Endothelial cell of umbilical vein (primary cell): ENCODE measurements at regions of chr2 and their contacts with region 1.

Region 1: DNA sequence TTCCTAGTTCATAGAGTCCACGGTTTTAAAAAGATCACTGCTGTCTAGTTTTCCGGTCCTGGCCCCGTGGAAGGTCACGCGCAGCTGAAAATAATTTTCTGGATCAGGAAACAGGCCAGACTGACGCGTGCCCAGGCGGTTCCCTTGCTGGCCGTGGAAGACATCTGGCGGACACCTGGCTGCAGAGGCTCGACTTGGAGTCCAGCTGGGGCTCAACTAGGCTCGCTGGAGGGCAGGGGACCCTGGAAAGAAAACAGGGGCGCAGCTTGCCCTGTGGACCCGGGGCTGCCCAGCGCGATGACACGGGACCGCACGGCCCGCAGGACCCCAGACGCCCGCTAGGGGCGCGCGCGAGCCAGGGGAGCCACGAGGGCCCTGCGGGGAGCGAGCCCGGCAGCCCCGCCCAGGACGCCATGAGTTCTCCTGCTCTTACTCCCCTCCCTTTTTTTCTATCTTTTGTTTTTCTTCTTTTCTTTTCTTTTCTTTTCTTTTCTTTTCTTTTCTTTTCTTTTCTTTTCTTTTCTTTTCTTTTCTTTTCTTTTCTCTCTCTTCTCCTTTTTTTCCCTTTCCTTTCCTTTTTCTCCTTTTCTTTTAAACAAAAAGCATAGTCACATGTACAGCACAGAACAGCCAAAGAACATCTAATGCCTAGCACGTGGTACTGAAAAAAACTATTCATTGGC is 43.2 kb upstream of the UBE2F start:
- DNase-seq: peak; percentile 51
- H3K4me3 ChIP-seq: no peak overlapping the region
- H3K27ac ChIP-seq: no peak overlapping the region
- H3K4me1 ChIP-seq: no peaks in the 10 kb centered on the region
- H3K27me3 ChIP-seq: no peaks in the 10 kb centered on the region
- CTCF ChIP-seq: peak; percentile 95 to 96
- POLR2A ChIP-seq: no peak

Region 2: GRCh38 chr2:237524631-237525030 is 399.0 kb before region 1 on chr2:
- CTCF ChIA-PET with region 1: no interaction called
- POLR2A ChIA-PET with region 1: no interaction called
- dilution Hi-C with region 1: no loop called
- intact Hi-C with region 1: no loop called
- DNase-seq: no peak
- H3K4me3 ChIP-seq: no peak overlapping the region
- H3K27ac ChIP-seq: no peak overlapping the region
- H3K4me1 ChIP-seq: no peaks in the 10 kb centered on the region
- H3K27me3 ChIP-seq: no peaks in the 10 kb centered on the region
- CTCF ChIP-seq: no peak
- POLR2A ChIP-seq: no peak

Region 3: DNA sequence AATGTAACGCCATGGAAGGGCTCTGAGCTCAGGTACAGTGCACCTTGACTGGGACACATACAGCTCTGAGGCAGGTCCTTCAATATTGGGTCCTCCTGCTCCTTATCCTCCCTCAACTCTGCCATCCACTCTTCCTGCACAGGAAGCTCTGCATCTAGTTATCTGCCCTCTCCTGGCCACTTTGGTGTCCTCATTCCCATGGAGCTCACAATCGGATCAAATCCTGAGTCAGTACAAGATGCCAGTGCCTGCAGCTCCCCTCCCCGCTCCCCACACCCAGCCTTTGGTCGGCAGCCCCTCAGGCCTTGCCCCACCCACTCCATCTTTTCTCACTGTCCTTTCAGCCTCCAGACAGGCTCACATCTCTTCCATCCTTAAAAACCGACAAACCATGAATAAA is 238.2 kb before region 1 on chr2:
- CTCF ChIA-PET with region 1: no interaction called
- POLR2A ChIA-PET with region 1: no interaction called
- dilution Hi-C with region 1: no loop called
- intact Hi-C with region 1: no loop called
- DNase-seq: no peak
- H3K4me3 ChIP-seq: no peak overlapping the region
- H3K27ac ChIP-seq: no peak overlapping the region
- H3K4me1 ChIP-seq: peaks cover 27% of the 10 kb centered on the region
- H3K27me3 ChIP-seq: no peaks in the 10 kb centered on the region
- CTCF ChIP-seq: peak; percentile 20 to 27
- POLR2A ChIP-seq: no peak

Region 4: DNA sequence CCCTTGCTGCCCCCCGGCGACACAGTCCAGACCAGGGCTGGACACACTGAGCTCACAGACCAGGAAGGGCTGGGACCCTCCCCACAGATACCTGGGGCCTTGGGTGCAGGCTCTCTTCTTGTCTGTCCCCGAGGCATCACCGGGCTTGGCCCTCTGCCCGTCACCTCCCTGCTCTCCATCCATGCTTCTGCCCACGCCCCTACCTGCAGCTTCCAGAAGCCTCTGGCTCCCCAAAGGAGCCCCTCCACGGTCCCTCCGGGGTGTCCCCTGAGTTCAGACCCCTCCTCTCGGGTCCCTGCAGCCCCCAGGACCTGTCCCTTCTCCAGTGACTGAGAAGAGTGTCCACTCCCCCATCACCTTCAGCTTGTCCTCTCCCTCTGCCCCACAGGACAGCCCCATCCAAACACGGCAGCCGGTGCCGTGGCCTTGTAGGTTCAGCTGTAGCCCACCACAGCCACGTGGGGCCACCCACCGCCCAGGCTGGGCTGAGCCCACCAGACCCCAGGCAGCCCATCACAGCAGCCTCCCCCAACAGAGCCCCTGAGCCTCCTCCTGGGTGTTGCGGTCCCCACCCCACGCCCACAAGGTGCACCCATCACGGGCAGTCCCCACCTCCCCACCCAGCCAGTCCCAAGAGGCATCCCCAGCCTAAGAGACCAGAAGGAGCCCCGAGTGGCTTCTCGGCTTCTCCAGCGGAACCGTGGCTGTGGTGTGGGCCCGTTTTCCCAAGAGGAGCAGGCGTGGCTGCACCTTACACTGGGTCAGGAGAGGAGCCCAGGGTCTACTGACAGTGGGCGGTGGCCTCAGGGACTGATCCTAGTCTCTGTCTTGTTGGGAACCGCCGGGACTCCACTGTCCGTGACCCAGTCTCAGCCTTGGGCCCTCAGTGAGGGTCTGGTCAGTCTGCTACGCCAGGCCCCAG is 11.1 kb before region 1 on chr2:
- CTCF ChIA-PET with region 1: interaction called, 10 read pairs
- POLR2A ChIA-PET with region 1: no interaction called
- dilution Hi-C with region 1: no loop called
- intact Hi-C with region 1: no loop called
- DNase-seq: no peak
- H3K4me3 ChIP-seq: no peak overlapping the region
- H3K27ac ChIP-seq: no peak overlapping the region
- H3K4me1 ChIP-seq: no peaks in the 10 kb centered on the region
- H3K27me3 ChIP-seq: peaks cover 0 to 2% of the 10 kb centered on the region in 2 experiments
- CTCF ChIP-seq: no peak
- POLR2A ChIP-seq: no peak

Region 5: GRCh38 chr2:237966565-237967462 is 43.2 kb after region 1 on chr2 and contains the start of gene UBE2F:
- CTCF ChIA-PET with region 1: no interaction called
- POLR2A ChIA-PET with region 1: no interaction called
- dilution Hi-C with region 1: no loop called
- intact Hi-C with region 1: loop called (anchors 1 kb)
- DNase-seq: peak; percentile 96
- H3K4me3 ChIP-seq: peak within 1 kb of the TSS; percentile 40 to 65 (median 63)
- H3K27ac ChIP-seq: no peak within 1 kb of the TSS
- H3K4me1 ChIP-seq: peaks cover 10% of the 10 kb centered on the region
- H3K27me3 ChIP-seq: no peaks in the 10 kb centered on the region
- CTCF ChIP-seq: no peak
- POLR2A ChIP-seq: peak; percentile 73
- total RNA-seq, gene UBE2F: 42.3 and 47.4 TPM in 2 replicates

Region 6: DNA sequence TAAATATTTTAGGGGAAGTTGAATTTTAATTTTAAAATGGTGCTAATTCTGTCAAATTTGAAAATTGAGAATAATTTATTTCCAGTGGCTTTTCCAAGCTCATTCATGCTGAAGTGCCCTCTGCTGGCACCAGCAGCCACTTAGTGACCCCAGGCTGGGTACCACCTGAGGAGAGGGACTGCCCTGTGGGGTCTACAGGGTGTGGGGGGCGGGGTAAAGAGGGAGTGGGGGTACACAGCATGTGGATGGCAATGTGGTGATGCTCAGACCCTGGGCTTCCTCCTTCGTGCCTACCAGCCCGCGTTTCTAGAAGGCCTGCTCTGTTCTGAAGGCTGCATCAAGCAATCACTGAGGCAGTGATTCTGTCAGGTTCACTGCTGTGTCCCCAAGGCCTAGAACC is 92.1 kb after region 1 on chr2:
- CTCF ChIA-PET with region 1: interaction called, 5 read pairs
- POLR2A ChIA-PET with region 1: no interaction called
- dilution Hi-C with region 1: no loop called
- intact Hi-C with region 1: loop called (anchors 1 kb)
- DNase-seq: no peak
- H3K4me3 ChIP-seq: no peak overlapping the region
- H3K27ac ChIP-seq: no peak overlapping the region
- H3K4me1 ChIP-seq: no peaks in the 10 kb centered on the region
- H3K27me3 ChIP-seq: no peaks in the 10 kb centered on the region
- CTCF ChIP-seq: peak; percentile 20 to 21
- POLR2A ChIP-seq: no peak

Region 7: GRCh38 chr2:238060542-238061314 is 137.1 kb after region 1 on chr2 and contains the start of gene SCLY:
- CTCF ChIA-PET with region 1: interaction called, 7 read pairs
- POLR2A ChIA-PET with region 1: no interaction called
- dilution Hi-C with region 1: no loop called
- intact Hi-C with region 1: loop called (anchors 1 kb)
- DNase-seq: peak; percentile 98
- H3K4me3 ChIP-seq: peak within 1 kb of the TSS; percentile 72 to 87 (median 77)
- H3K27ac ChIP-seq: peak within 1 kb of the TSS; percentile 54
- H3K4me1 ChIP-seq: peaks cover 10% of the 10 kb centered on the region
- H3K27me3 ChIP-seq: no peaks in the 10 kb centered on the region
- CTCF ChIP-seq: no peak
- POLR2A ChIP-seq: peak; percentile 68
- total RNA-seq, gene SCLY: 28.6 and 32.7 TPM in 2 replicates

Region 8: DNA sequence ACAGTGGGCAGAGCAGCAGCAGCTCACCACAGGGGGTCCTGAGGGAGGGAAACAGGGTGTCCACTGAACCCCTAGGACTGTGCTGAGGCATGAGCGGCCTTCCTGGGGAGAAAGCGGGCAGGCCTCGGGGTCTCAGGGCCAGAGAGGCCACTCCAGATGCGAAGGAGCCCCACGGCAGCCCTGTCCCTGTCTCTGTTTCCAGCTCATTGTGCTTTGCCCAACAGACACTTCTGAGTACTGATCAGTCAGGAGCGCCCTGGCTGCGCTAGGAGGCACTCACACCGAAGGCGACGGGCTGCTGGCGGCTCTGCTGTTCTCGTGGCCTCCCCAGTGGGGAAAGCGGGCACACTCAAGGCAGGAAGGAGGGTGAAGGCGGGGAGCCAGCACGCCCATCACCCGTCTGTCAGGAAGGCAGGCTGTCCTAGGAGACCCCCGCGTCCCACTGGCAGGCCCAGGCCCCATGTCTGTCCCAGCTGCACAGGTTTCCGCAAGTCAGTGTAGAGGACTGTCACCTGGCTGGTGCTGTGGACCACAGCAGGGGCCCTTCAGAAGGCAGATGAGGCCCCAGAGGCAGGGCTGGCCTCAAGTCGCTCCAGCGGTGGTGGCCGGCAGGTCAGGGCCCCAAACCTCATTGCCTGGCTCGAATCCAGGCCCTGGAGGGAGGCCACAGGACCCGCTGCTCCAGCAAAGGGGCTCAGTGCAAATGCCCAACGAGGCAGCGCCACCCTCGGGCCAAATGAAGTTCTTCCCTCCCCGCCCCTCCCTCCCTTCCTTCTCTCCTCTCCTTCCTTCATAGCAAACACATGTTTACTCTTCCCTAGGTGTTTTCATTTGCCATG is 183.3 kb after region 1 on chr2:
- CTCF ChIA-PET with region 1: no interaction called
- POLR2A ChIA-PET with region 1: no interaction called
- dilution Hi-C with region 1: no loop called
- intact Hi-C with region 1: loop called (anchors 10 kb)
- DNase-seq: no peak
- H3K4me3 ChIP-seq: no peak overlapping the region
- H3K27ac ChIP-seq: no peak overlapping the region
- H3K4me1 ChIP-seq: no peaks in the 10 kb centered on the region
- H3K27me3 ChIP-seq: no peaks in the 10 kb centered on the region
- CTCF ChIP-seq: peak in 1 of 2 donors; percentile 24
- POLR2A ChIP-seq: no peak

Region 9: GRCh38 chr2:238139196-238140039 is 215.8 kb after region 1 on chr2:
- CTCF ChIA-PET with region 1: no interaction called
- POLR2A ChIA-PET with region 1: no interaction called
- dilution Hi-C with region 1: no loop called
- intact Hi-C with region 1: loop called (anchors 1 kb)
- DNase-seq: no peak
- H3K4me3 ChIP-seq: no peak overlapping the region
- H3K27ac ChIP-seq: no peak overlapping the region
- H3K4me1 ChIP-seq: no peaks in the 10 kb centered on the region
- H3K27me3 ChIP-seq: no peaks in the 10 kb centered on the region
- CTCF ChIP-seq: peak; percentile 64 to 67
- POLR2A ChIP-seq: no peak